CD4-positive, alpha-beta T cell (primary cell): ENCODE measurements at regions of chr6 and their contacts with region 1.

Region 1: GRCh38 chr6:28782113-28782673 is 141.6 kb downstream of the TRIM27 start:
- DNase-seq: no peak
- ATAC-seq: no peak
- H3K4me3 ChIP-seq: no peak overlapping the region
- H3K4me3 Mint-ChIP-seq: no peak overlapping the region
- H3K27ac ChIP-seq: no peak overlapping the region
- H3K27ac Mint-ChIP-seq: no peak overlapping the region
- H3K4me1 ChIP-seq: peaks cover 4% of the 10 kb centered on the region
- H3K4me1 Mint-ChIP-seq: no peaks in the 10 kb centered on the region
- H3K27me3 ChIP-seq: peaks cover 77 to 84% of the 10 kb centered on the region in 2 experiments
- H3K27me3 Mint-ChIP-seq: peaks cover 98% of the 10 kb centered on the region
- CTCF ChIP-seq: no peak

Region 2: GRCh38 chr6:27772261-27773001 is 1009.8 kb before region 1 on chr6:
- CTCF ChIA-PET with region 1: no interaction called
- POLR2A ChIA-PET with region 1: no interaction called
- intact Hi-C with region 1: no loop called
- DNase-seq: peak; percentile 70 to 92 (median 82)
- ATAC-seq: peak; percentile 97
- H3K4me3 ChIP-seq: no peak overlapping the region
- H3K4me3 Mint-ChIP-seq: peak overlapping the region; percentile 36
- H3K27ac ChIP-seq: no peak overlapping the region
- H3K27ac Mint-ChIP-seq: no peak overlapping the region
- H3K4me1 ChIP-seq: peaks cover 9% of the 10 kb centered on the region
- H3K4me1 Mint-ChIP-seq: peaks cover 9% of the 10 kb centered on the region
- H3K27me3 ChIP-seq: peaks cover 0 to 10% of the 10 kb centered on the region in 2 experiments
- H3K27me3 Mint-ChIP-seq: peaks cover 18% of the 10 kb centered on the region
- CTCF ChIP-seq: peak; percentile 90

Region 3: GRCh38 chr6:28816909-28817807 is 35.0 kb after region 1 on chr6:
- CTCF ChIA-PET with region 1: no interaction called
- POLR2A ChIA-PET with region 1: no interaction called
- intact Hi-C with region 1: loop called in 1 of 2 experiments (anchors 5 kb)
- DNase-seq: no peak
- ATAC-seq: no peak
- H3K4me3 ChIP-seq: no peak overlapping the region
- H3K4me3 Mint-ChIP-seq: no peak overlapping the region
- H3K27ac ChIP-seq: no peak overlapping the region
- H3K27ac Mint-ChIP-seq: no peak overlapping the region
- H3K4me1 ChIP-seq: peaks cover 8% of the 10 kb centered on the region
- H3K4me1 Mint-ChIP-seq: peaks cover 13% of the 10 kb centered on the region
- H3K27me3 ChIP-seq: peaks cover 73 to 95% of the 10 kb centered on the region in 2 experiments
- H3K27me3 Mint-ChIP-seq: peaks cover 96% of the 10 kb centered on the region
- CTCF ChIP-seq: no peak